ENCODE measurements at regions of chr2 and their contacts with region 1.

Region 1: DNA sequence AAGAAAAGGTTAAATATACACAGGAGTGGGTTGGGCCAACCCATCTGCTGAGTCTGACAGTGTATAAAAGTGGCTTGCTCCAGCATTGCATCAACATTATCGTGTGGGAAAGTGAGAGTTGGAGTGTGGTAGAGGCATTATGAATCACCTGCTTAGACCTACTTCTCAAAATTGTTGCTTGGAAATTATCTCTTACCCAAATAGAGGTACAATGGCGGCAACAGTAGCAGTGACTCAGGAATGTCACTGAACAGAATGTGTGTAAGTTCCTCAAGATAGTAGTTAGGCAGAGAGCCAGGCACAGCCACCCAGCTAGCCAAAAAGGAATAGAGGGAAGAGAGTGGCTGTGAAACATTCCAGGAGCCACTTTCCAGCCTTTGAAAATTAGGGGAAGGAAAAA is 616.0 kb downstream of the NUP35 start:
- DNase-seq: no peak
- H3K4me3 ChIP-seq: no peak overlapping the region
- H3K27ac ChIP-seq: no peak overlapping the region
- H3K4me1 ChIP-seq: no peaks in the 10 kb centered on the region
- H3K27me3 ChIP-seq: no peaks in the 10 kb centered on the region
- CTCF ChIP-seq: no peak
- EP300 ChIP-seq: no peak
- POLR2A ChIP-seq: no peak

Region 2: DNA sequence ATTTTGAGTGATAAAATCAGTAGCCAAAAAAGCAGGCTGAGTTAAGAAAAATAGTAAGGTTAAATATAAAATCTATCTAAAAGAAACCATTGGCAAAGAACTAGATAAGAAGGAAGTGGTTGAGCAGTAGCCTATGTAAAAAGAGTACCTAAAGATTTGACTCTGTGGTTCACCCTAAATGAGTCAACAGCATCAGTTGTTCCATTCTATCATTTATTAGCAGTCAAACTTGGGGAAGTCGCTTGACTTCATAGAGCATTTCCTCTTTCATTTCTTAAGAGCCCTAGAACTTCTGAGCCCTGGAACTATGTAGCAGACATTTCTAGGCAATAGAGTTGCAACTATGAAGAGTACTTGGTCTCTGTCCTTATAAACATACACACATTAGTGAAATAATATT is 234.3 kb before region 1 on chr2:
- in situ Hi-C with region 1: no loop called
- intact Hi-C with region 1: no loop called
- DNase-seq: no peak
- H3K4me3 ChIP-seq: no peak overlapping the region
- H3K27ac ChIP-seq: no peak overlapping the region
- H3K4me1 ChIP-seq: no peaks in the 10 kb centered on the region
- H3K27me3 ChIP-seq: no peaks in the 10 kb centered on the region
- CTCF ChIP-seq: no peak
- EP300 ChIP-seq: no peak
- POLR2A ChIP-seq: no peak

Region 3: GRCh38 chr2:183759033-183759432 is 18.8 kb after region 1 on chr2:
- in situ Hi-C with region 1: no loop called
- intact Hi-C with region 1: loop called (anchors 2 kb)
- DNase-seq: no peak
- H3K4me3 ChIP-seq: no peak overlapping the region
- H3K27ac ChIP-seq: no peak overlapping the region
- H3K4me1 ChIP-seq: no peaks in the 10 kb centered on the region
- H3K27me3 ChIP-seq: no peaks in the 10 kb centered on the region
- CTCF ChIP-seq: no peak
- EP300 ChIP-seq: no peak
- POLR2A ChIP-seq: no peak

Measured in transverse colon (tissue), 4 donors.